Caco-2 (cell line): ENCODE measurements at regions of chr6 and their contacts with region 1.

Region 1: GRCh38 chr6:167898673-167899311 is 72.1 kb downstream of the AFDN start:
- DNase-seq: no peak
- H3K4me3 ChIP-seq: no peak overlapping the region
- H3K4me3 Mint-ChIP-seq: no peak overlapping the region
- H3K27ac Mint-ChIP-seq: no peak overlapping the region
- H3K4me1 ChIP-seq: no peaks in the 10 kb centered on the region
- H3K4me1 Mint-ChIP-seq: peaks cover 11% of the 10 kb centered on the region
- H3K27me3 ChIP-seq: no peaks in the 10 kb centered on the region
- H3K27me3 Mint-ChIP-seq: no peaks in the 10 kb centered on the region
- CTCF ChIP-seq: peak; percentile 53 to 60

Region 2: GRCh38 chr6:167485186-167485978 is 413.4 kb before region 1 on chr6:
- CTCF ChIA-PET with region 1: no interaction called
- POLR2A ChIA-PET with region 1: no interaction called
- intact Hi-C with region 1: loop called (anchors 1 kb)
- DNase-seq: peak in 1 of 2 experiments; percentile 46
- H3K4me3 ChIP-seq: no peak overlapping the region
- H3K4me3 Mint-ChIP-seq: no peak overlapping the region
- H3K27ac Mint-ChIP-seq: no peak overlapping the region
- H3K4me1 ChIP-seq: peaks cover 17% of the 10 kb centered on the region
- H3K4me1 Mint-ChIP-seq: peaks cover 32% of the 10 kb centered on the region
- H3K27me3 ChIP-seq: no peaks in the 10 kb centered on the region
- H3K27me3 Mint-ChIP-seq: no peaks in the 10 kb centered on the region
- CTCF ChIP-seq: peak; percentile 28 to 32

Region 3: GRCh38 chr6:167501781-167502385 is 396.9 kb before region 1 on chr6:
- CTCF ChIA-PET with region 1: no interaction called
- POLR2A ChIA-PET with region 1: no interaction called
- intact Hi-C with region 1: loop called (anchors 5 kb)
- DNase-seq: peak; percentile 49 to 59
- H3K4me3 ChIP-seq: no peak overlapping the region
- H3K4me3 Mint-ChIP-seq: no peak overlapping the region
- H3K27ac Mint-ChIP-seq: no peak overlapping the region
- H3K4me1 ChIP-seq: peaks cover 7% of the 10 kb centered on the region
- H3K4me1 Mint-ChIP-seq: no peaks in the 10 kb centered on the region
- H3K27me3 ChIP-seq: no peaks in the 10 kb centered on the region
- H3K27me3 Mint-ChIP-seq: no peaks in the 10 kb centered on the region
- CTCF ChIP-seq: peak; percentile 34 to 58

Region 4: DNA sequence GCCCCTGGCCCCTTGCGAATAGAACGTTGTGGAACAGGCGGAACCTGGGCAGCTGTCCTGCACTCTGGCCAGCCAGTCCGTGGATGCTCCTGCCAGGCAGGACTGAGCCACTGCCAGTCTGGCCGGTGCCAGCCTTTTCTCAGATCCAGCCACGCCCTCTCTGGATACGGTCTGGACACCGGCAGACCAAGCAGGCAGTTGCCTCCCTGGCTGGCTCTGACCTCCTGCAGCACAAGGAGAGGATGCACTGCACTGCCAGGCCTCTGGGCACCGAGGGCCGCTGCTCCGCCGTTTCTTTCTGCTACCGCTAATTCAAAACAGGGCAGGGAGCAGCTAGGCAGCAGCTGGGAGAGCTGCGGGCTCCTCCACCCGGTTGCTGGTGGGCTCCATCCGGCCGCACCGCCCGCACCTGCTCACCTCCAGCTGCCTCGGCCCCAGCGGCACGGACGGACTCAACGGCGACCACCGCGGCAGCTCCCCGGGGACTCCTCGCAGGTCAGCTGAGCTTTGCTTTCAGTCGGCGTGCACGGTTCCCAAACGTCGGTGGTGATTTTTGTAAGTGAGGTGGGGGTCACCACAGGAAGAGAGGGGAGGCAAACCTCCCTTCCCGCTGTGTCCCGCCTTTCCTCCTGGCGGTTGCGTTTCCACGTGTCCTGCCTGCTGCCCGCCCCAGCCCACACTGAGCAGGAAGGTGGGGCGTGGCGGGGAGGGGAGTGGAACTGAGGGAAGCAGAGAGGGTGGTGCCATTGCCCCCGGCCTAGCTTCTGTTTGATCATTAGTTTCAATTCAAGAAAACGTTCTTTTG is 102.4 kb before region 1 on chr6:
- CTCF ChIA-PET with region 1: no interaction called
- POLR2A ChIA-PET with region 1: no interaction called
- intact Hi-C with region 1: no loop called
- DNase-seq: peak; percentile 51 to 53
- H3K4me3 ChIP-seq: peak overlapping the region; percentile 51
- H3K4me3 Mint-ChIP-seq: peak overlapping the region; percentile 62
- H3K27ac Mint-ChIP-seq: peak overlapping the region; percentile 27
- H3K4me1 ChIP-seq: peaks cover 17% of the 10 kb centered on the region
- H3K4me1 Mint-ChIP-seq: peaks cover 22% of the 10 kb centered on the region
- H3K27me3 ChIP-seq: no peaks in the 10 kb centered on the region
- H3K27me3 Mint-ChIP-seq: no peaks in the 10 kb centered on the region
- CTCF ChIP-seq: no peak

Region 5: GRCh38 chr6:168050881-168051586 is 152.2 kb after region 1 on chr6:
- CTCF ChIA-PET with region 1: no interaction called
- POLR2A ChIA-PET with region 1: no interaction called
- intact Hi-C with region 1: no loop called
- DNase-seq: no peak
- H3K4me3 ChIP-seq: no peak overlapping the region
- H3K4me3 Mint-ChIP-seq: no peak overlapping the region
- H3K27ac Mint-ChIP-seq: no peak overlapping the region
- H3K4me1 ChIP-seq: no peaks in the 10 kb centered on the region
- H3K4me1 Mint-ChIP-seq: no peaks in the 10 kb centered on the region
- H3K27me3 ChIP-seq: no peaks in the 10 kb centered on the region
- H3K27me3 Mint-ChIP-seq: no peaks in the 10 kb centered on the region
- CTCF ChIP-seq: no peak